Mammary epithelial cell (primary cell): ENCODE measurements at regions of chr15 and their contacts with region 1.

Region 1: DNA sequence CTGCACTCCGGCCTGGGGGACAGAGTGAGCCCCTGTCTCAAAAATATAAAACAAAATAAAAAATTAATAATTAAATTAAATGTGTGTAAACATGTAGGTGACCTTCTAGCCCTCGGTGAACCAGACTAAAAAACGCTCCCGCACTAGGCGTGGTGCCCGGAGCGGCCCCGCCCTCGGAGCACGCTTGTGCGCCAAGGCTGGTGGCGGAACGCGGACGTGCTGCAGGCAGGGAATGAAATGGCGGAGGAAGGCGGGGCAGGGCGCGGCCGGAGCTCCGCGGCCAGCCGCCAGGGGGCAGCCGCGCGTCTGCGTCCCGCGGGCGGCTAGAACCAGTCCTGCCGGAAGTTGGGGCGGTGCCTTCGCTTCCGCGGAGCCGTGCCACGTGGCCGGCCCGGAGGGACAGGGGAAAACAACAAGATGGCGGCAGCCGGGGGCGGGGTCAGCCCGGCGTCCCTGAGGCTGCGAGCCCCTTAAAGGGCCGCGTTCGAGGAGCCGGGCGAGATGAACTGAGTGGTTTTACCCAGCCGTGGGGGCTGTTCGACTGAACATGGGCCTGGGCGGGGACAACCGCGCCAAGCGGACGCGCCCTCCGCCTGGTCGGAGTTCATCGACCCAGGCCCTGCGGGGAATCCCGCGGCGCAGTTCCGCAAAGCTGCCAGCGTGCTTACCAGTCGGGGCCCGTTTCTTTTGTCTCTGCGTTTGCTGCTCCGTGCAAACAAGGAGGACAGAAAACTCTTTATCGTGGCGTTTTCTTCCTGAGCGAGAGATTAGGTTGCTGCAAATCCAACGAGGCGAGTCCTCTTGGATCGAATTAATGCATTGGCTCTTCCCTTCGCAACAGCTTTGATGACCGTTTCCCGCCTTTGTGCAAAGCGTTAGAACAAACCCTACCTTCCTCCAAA is 90.9 kb upstream of the CHD2 start:
- DNase-seq: peak; percentile 96
- H3K4me3 ChIP-seq: peak overlapping the region; percentile 41 to 66 (median 60)
- H3K27ac ChIP-seq: peak overlapping the region; percentile 98
- H3K4me1 ChIP-seq: peaks cover 37% of the 10 kb centered on the region
- H3K27me3 ChIP-seq: no peaks in the 10 kb centered on the region
- CTCF ChIP-seq: peak; percentile 74 to 76

Region 2: DNA sequence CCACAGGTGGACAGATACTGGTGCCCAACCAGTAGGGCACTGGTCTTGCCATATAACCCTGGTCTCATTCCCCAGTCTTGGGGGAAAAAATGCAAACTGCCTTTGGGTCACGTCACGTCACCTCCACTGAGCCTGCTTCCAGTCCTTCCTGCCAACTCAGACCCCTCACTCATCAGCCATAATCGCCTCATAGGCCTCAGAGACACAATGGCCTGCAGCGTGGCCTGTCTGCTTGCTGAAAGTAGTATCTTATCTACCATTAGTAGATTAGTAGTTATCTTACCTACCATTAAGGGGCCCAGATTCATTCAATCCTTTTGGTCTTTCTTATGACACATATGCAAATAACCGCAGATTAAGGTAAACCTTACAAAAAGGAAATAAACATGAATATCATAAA is 247.5 kb before region 1 on chr15:
- CTCF ChIA-PET with region 1: no interaction called
- dilution Hi-C with region 1: no loop called
- in situ Hi-C with region 1: no loop called
- intact Hi-C with region 1: no loop called
- DNase-seq: no peak
- H3K4me3 ChIP-seq: no peak overlapping the region
- H3K27ac ChIP-seq: no peak overlapping the region
- H3K4me1 ChIP-seq: no peaks in the 10 kb centered on the region
- H3K27me3 ChIP-seq: no peaks in the 10 kb centered on the region
- CTCF ChIP-seq: no peak

Region 3: GRCh38 chr15:92645030-92645756 is 164.0 kb before region 1 on chr15:
- CTCF ChIA-PET with region 1: no interaction called
- dilution Hi-C with region 1: no loop called
- in situ Hi-C with region 1: no loop called
- intact Hi-C with region 1: no loop called
- DNase-seq: no peak
- H3K4me3 ChIP-seq: no peak overlapping the region
- H3K27ac ChIP-seq: no peak overlapping the region
- H3K4me1 ChIP-seq: no peaks in the 10 kb centered on the region
- H3K27me3 ChIP-seq: no peaks in the 10 kb centered on the region
- CTCF ChIP-seq: no peak

Region 4: GRCh38 chr15:92820236-92821021 is 11.2 kb after region 1 on chr15:
- CTCF ChIA-PET with region 1: no interaction called
- dilution Hi-C with region 1: no loop called
- in situ Hi-C with region 1: no loop called
- intact Hi-C with region 1: loop called (anchors 1 kb)
- DNase-seq: peak; percentile 92
- H3K4me3 ChIP-seq: peak overlapping the region; percentile 37 to 47 (median 46)
- H3K27ac ChIP-seq: peak overlapping the region; percentile 96
- H3K4me1 ChIP-seq: peaks cover 46% of the 10 kb centered on the region
- H3K27me3 ChIP-seq: no peaks in the 10 kb centered on the region
- CTCF ChIP-seq: no peak

Region 5: GRCh38 chr15:92917606-92918407 is 108.6 kb after region 1 on chr15:
- CTCF ChIA-PET with region 1: interaction called, 7 read pairs
- dilution Hi-C with region 1: no loop called
- in situ Hi-C with region 1: loop called (anchors 5 to 10 kb)
- intact Hi-C with region 1: loop called (anchors 1 kb)
- DNase-seq: peak; percentile 86
- H3K4me3 ChIP-seq: peak overlapping the region in 1 of 3 experiments; percentile 8
- H3K27ac ChIP-seq: peak overlapping the region; percentile 83
- H3K4me1 ChIP-seq: peaks cover 61% of the 10 kb centered on the region
- H3K27me3 ChIP-seq: no peaks in the 10 kb centered on the region
- CTCF ChIP-seq: peak; percentile 75 to 87